Activated CD4-positive, alpha-beta T cell treated with anti-CD3 and anti-CD28 coated beads for 36 hours (primary cell): ENCODE measurements at regions of chr10 and their contacts with region 1.

Region 1: DNA sequence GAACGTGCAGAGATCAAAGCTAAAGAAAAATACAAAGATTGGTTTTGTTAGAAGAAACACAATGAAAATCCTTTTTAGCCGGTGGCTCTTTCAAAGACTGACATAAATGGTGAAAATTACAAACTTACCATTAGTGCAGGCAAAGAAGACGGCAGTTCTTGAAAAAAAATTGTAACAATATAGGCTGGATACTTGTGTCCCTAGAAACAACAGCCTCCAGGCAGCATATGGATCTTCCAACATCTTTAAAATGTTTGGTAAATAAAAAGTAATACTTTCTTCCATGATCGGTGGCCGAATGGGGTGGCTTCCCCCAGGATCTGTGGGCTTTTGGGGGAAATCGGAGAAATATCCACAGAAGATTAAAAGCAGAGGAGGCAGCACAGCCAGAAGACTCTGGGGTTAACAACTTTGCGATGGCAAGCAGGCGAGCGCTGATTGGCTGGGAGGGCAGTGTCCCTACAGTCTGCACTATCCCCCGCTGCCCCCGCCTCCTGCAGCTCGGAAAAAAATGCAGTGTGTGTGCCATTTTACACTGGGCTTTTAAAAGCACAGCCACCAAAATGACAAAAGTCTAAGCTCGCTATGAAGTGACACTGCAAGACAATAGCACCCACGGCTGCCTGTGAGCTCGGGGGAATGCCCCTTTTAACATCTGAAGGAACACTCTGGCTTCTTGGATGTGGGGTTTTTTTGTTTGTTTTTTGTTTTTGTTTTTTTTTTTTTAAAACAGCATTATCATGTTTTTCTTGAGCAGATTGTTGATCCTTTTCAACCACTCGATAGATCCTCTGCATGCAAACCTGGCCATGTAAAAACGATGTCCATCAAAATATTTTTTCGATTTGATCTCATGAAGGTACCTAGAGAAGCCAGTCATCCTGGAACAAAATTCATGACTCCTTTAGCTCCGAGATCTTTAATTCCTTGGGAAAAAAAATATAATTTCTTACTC is 31.7 kb upstream of the EPC1 start:
- DNase-seq: peak; percentile 97
- ATAC-seq: peak; percentile 95
- H3K4me3 Mint-ChIP-seq: no peak overlapping the region
- H3K27ac Mint-ChIP-seq: no peak overlapping the region
- H3K4me1 Mint-ChIP-seq: peaks cover 18% of the 10 kb centered on the region
- H3K27me3 Mint-ChIP-seq: no peaks in the 10 kb centered on the region

Region 2: DNA sequence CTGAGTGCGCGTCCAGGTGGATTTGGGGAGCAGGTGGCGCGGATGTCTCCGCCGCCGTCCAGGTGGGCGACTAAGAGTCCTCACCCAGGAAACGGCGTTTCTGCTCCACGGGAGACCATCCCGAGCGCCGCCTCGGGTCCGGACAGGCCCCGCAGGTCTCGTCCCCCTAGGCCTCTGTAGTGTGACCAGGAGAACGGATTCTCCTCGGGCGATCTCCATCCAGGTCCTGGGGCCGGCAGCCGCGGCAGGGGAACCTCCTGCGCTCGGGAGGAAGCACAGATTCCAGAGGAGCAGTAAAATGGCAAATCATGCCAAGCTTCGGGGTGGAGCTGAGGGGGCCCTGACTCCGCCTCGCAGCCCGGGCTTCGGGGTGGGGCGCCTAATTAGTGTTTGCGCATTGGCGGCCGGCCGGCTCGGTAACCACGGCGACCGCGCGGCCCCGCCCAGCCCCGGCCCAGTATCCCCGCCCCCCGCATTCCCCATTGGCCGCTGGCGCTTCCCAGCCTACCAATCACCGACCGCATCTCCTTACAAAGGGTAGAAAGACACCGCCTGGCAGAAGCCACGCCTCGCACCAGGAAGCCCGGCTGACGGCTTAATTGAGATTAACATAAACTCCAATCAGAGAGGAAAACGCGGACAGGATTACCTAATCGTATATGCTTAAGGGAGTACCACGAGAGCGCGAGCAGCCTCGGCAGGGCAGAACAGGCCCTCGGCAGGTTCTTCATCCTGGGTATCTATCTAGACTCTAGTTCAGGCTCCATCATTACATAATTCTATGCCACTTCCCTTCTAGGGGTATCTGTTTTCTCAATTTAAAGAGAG is 618.6 kb before region 1 on chr10:
- CTCF ChIA-PET with region 1: no interaction called
- POLR2A ChIA-PET with region 1: no interaction called
- intact Hi-C with region 1: loop called in 1 of 2 experiments (anchors 5 kb)
- DNase-seq: peak; percentile 97
- ATAC-seq: peak; percentile 94
- H3K4me3 Mint-ChIP-seq: peak overlapping the region; percentile 91
- H3K27ac Mint-ChIP-seq: peak overlapping the region; percentile 94
- H3K4me1 Mint-ChIP-seq: peaks cover 15% of the 10 kb centered on the region
- H3K27me3 Mint-ChIP-seq: no peaks in the 10 kb centered on the region

Region 3: DNA sequence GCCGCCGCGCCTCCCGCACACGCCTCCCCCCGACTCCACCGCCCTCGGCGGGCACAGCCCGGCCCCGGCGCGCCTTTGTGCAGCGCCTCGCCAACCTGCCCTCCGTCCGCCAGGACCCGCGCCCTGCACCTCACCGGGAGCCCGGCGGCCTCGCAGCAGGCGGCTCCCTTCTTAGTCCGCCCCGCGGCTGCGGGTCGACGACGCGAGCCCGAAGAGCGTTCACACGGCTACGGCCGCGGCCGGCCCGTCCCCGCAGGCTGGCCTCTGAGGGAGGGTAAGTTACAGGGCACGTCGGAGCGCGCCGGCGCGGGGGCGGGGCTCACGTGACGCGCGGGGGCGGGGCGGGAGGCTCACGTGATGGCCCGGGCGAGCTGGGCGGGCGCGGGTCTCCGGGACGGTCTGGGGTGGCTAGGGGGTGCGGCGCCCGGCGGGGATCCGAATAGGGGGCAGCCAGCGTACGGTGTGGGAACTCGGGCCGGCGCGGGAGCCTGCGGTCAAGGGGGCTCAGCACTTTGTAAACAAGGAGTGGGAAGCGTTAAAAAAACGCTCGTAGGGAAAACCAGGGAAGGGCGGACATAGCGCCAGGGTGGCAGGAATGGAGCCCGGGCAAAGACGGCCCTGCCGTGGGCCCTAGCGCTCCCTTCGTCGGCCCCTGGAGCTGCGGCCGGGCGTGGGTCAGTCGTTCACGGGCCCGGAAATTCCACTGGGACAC is 449.9 kb before region 1 on chr10 and contains the start of gene ARHGAP12:
- CTCF ChIA-PET with region 1: no interaction called
- POLR2A ChIA-PET with region 1: no interaction called
- intact Hi-C with region 1: loop called (anchors 2 to 5 kb)
- DNase-seq: peak; percentile 87
- ATAC-seq: peak; percentile 52
- H3K4me3 Mint-ChIP-seq: peak within 1 kb of the TSS; percentile 84
- H3K27ac Mint-ChIP-seq: peak within 1 kb of the TSS; percentile 74
- H3K4me1 Mint-ChIP-seq: peaks cover 42% of the 10 kb centered on the region
- H3K27me3 Mint-ChIP-seq: no peaks in the 10 kb centered on the region
- total RNA-seq, gene ARHGAP12: 5.5 to 6.4 TPM

Region 4: DNA sequence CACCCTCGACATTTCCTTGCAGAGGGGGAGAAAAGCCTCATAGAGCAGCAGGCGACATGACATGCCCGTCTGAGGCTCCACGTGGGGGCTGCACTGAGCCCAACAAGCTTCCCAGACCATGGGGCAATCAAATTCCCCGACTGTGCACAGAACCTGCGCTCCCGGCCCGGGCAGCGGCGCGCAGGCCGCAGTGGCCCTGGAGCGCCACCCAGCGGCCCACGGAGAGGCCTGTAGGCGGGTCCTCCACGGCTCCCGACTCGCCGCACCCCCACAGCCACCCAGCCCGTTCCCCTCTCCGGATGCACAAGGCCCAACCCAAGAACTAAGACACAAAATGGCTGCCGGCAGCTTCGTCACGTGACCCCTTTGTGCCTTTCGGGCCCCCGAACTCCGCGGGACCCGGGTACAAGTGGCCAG is 32.5 kb before region 1 on chr10:
- CTCF ChIA-PET with region 1: interaction called, 8 read pairs
- POLR2A ChIA-PET with region 1: no interaction called
- intact Hi-C with region 1: loop called (anchors 1 to 2 kb)
- DNase-seq: peak; percentile 98
- ATAC-seq: peak; percentile 88
- H3K4me3 Mint-ChIP-seq: peak overlapping the region; percentile 84
- H3K27ac Mint-ChIP-seq: peak overlapping the region; percentile 99
- H3K4me1 Mint-ChIP-seq: peaks cover 71% of the 10 kb centered on the region
- H3K27me3 Mint-ChIP-seq: no peaks in the 10 kb centered on the region

Region 5: GRCh38 chr10:32426186-32426585 is 47.5 kb after region 1 on chr10:
- CTCF ChIA-PET with region 1: no interaction called
- POLR2A ChIA-PET with region 1: no interaction called
- intact Hi-C with region 1: no loop called
- DNase-seq: no peak
- ATAC-seq: no peak
- H3K4me3 Mint-ChIP-seq: no peak overlapping the region
- H3K27ac Mint-ChIP-seq: no peak overlapping the region
- H3K4me1 Mint-ChIP-seq: no peaks in the 10 kb centered on the region
- H3K27me3 Mint-ChIP-seq: no peaks in the 10 kb centered on the region

Region 6: DNA sequence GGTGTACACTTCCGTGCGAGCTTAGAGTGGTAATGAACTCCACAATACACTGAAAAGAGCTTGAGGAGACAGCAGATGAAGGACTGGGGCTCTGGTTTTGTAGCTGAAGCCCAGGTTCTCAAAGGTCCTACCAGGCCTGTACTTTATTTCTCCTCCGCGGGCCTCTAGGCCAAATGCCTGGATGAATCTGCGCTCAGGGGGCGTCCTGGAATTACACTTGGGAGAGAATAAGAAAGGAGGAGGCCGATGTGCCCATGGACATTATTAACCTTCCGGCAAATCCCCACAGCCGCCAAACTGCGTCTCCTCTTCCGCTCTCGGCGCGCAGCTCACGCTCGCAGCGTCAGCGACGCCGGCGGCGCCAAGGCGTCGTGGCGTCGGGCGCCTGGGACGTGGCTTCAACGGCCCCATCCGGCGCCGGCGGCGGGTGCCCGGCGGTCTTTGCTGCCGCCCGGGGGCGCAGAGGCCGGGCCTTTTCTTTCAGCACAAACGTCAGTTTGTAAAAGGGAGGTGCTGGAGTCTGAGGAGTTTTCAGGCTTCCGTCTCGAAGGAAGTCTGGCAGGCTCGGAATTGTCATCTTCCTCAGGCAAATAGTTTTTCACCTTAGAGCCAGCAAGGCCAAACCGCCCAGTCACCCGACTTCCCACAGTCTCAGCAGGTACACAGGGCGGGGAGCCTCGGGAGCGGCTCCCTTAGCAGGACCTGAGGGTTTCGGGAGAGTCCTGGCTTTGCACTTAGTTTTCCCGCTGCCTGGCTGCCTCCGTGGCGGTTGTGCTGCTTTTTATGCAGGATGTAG is 67.3 kb after region 1 on chr10 and contains the start of gene CCDC7:
- CTCF ChIA-PET with region 1: interaction called, 6 read pairs
- POLR2A ChIA-PET with region 1: no interaction called
- intact Hi-C with region 1: loop called (anchors 1 kb)
- DNase-seq: peak; percentile 91
- ATAC-seq: peak; percentile 97
- H3K4me3 Mint-ChIP-seq: peak within 1 kb of the TSS; percentile 82
- H3K27ac Mint-ChIP-seq: peak within 1 kb of the TSS; percentile 99
- H3K4me1 Mint-ChIP-seq: peaks cover 10% of the 10 kb centered on the region
- H3K27me3 Mint-ChIP-seq: no peaks in the 10 kb centered on the region
- total RNA-seq, gene CCDC7: 9.0 TPM

Region 7: GRCh38 chr10:32511599-32511998 is 133.0 kb after region 1 on chr10:
- CTCF ChIA-PET with region 1: no interaction called
- POLR2A ChIA-PET with region 1: no interaction called
- intact Hi-C with region 1: no loop called
- DNase-seq: no peak
- ATAC-seq: no peak
- H3K4me3 Mint-ChIP-seq: no peak overlapping the region
- H3K27ac Mint-ChIP-seq: no peak overlapping the region
- H3K4me1 Mint-ChIP-seq: no peaks in the 10 kb centered on the region
- H3K27me3 Mint-ChIP-seq: no peaks in the 10 kb centered on the region

Region 8: DNA sequence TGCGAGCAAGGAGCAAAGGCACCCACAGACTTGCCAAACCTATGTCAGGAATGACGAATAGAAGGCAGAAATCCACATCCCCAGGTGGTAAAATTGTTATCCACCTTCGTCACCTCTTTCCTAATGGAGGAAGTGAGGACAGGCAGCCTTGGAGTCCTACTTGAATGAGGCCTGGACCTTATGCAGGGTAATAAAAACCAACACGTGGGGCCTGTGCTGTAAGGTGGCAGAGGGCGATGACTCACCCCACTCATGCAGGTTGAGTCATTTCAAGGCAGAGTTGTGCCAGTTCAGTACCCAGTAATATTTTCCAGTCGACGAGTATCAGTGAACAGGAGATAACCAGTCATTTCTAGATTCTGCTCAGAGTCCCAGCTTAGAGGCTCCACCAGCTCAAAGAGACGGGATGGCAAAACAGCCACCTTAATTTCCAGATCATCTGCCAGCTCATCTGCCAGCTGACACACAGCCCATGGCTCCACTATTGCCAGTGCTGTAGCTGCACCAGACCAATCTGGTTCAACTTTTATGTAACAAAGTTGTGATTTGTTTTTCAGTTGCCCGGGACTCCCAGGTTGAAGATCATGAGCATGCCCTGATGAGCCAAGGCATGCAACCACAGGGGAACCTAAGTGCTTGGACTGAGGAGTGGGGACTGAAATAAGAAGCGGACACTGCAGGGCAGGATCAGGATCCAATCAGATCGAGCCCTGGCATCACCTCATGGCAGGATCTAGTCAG is 755.5 kb after region 1 on chr10:
- CTCF ChIA-PET with region 1: no interaction called
- POLR2A ChIA-PET with region 1: no interaction called
- intact Hi-C with region 1: loop called (anchors 5 to 10 kb)
- DNase-seq: peak; percentile 89
- ATAC-seq: peak; percentile 77
- H3K4me3 Mint-ChIP-seq: peak overlapping the region; percentile 25
- H3K27ac Mint-ChIP-seq: peak overlapping the region; percentile 83
- H3K4me1 Mint-ChIP-seq: peaks cover 83% of the 10 kb centered on the region
- H3K27me3 Mint-ChIP-seq: no peaks in the 10 kb centered on the region